ENCODE measurements at regions of chr14 and their contacts with region 1.

Region 1: GRCh38 chr14:76767681-76768656 is 6.7 kb downstream of the VASH1 start:
- DNase-seq: peak in 1 of 2 experiments; percentile 0
- H3K4me3 ChIP-seq: no peak overlapping the region
- H3K27ac ChIP-seq: no peak overlapping the region
- H3K4me1 ChIP-seq: peaks cover 5% of the 10 kb centered on the region
- H3K27me3 ChIP-seq: peaks cover 91% of the 10 kb centered on the region
- CTCF ChIP-seq: no peak

Region 2: DNA sequence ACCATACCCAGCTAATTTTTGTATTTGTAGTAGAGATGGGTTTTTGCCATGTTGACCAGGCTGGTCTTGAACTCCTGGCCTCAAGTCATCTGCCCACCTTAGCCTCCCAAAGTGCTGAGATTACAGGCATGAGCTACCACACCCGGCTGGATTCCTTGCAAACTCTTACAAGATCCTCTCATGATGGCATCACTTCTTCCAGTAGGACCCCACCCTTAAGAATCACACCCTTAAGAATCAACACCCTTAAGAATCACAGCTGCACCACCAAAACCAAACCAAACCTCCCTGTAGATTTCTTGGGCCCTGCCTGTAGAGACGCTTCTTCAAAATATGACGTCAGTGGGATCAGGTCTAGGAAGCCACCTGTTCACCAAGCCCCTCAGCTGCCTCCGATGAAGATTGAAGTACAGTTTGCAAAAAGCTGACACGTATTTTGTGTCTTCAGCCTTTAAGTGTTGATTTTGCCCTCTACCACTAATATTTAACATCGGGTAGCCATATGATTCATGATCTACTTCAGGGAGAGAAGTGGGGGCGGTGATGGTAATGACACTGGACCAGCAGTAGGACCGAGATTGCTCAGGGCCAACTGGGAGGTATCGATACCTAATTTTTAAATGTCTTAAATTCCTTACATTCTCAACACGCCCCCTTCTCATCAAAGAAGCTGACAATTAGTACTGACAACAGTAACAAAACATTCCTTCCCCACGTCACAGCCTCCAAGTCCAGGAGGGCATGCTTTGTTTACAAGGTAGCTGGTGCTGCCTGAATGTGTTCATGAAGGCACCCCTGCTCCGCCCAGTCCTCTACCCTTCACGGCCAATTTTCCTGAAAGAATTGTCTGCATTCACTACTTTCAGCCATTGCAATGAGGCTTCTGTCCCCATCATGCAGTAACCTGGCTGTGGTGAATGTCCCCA is 334.9 kb before region 1 on chr14:
- CTCF ChIA-PET with region 1: interaction called, 18 read pairs
- POLR2A ChIA-PET with region 1: no interaction called
- intact Hi-C with region 1: no loop called
- DNase-seq: no peak
- H3K4me3 ChIP-seq: no peak overlapping the region
- H3K27ac ChIP-seq: no peak overlapping the region
- H3K4me1 ChIP-seq: no peaks in the 10 kb centered on the region
- H3K27me3 ChIP-seq: peaks cover 98% of the 10 kb centered on the region
- CTCF ChIP-seq: no peak

Region 3: DNA sequence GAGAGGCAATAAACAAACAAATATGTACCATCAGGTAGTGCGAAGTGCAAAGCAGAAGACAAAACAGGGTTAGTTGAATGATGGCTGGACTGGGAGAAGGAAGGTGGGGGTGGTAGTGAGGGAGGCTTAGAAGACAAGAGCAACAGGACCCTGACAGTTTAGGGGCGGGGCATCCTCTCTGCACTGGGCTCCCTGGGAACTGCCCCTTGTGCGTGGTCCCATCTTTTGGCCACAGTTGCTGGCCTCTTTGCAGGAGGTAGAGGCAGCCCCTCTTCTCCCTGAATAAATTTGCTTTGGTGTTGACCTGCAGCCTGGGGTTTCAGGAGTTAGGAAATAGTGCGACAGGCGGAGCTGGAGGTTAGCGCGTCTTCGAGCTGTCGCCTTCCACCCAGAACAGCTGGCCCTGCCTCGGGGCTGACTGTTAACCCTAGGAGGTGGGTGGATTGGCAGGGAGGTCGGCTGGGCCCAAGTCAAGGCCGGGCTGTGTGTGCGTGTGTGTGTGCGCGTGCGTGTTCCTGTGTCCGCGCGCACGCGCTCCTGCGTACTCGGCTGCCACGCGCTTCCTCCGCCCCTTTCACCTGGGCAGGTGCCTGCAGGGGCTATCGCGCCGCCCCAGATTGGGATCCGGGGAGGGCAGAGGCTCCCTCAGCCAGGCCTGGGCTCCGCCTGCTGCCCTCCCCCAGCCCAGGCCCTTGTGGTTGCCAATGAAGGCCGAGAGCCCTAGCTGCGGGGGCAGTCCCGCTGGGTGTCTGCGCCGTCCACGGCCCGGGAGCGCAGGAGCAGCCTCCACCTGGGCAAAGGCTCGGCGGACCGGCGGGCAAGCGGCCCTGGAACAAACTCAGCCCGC is 1212.7 kb after region 1 on chr14:
- CTCF ChIA-PET with region 1: no interaction called
- POLR2A ChIA-PET with region 1: no interaction called
- intact Hi-C with region 1: loop called (anchors 5 kb)
- DNase-seq: peak in 1 of 2 experiments; percentile 46
- H3K4me3 ChIP-seq: no peak overlapping the region
- H3K27ac ChIP-seq: no peak overlapping the region
- H3K4me1 ChIP-seq: no peaks in the 10 kb centered on the region
- H3K27me3 ChIP-seq: peaks cover 67% of the 10 kb centered on the region
- CTCF ChIP-seq: no peak